ENCODE measurements at regions of chr12 and their contacts with region 1.

Region 1: DNA sequence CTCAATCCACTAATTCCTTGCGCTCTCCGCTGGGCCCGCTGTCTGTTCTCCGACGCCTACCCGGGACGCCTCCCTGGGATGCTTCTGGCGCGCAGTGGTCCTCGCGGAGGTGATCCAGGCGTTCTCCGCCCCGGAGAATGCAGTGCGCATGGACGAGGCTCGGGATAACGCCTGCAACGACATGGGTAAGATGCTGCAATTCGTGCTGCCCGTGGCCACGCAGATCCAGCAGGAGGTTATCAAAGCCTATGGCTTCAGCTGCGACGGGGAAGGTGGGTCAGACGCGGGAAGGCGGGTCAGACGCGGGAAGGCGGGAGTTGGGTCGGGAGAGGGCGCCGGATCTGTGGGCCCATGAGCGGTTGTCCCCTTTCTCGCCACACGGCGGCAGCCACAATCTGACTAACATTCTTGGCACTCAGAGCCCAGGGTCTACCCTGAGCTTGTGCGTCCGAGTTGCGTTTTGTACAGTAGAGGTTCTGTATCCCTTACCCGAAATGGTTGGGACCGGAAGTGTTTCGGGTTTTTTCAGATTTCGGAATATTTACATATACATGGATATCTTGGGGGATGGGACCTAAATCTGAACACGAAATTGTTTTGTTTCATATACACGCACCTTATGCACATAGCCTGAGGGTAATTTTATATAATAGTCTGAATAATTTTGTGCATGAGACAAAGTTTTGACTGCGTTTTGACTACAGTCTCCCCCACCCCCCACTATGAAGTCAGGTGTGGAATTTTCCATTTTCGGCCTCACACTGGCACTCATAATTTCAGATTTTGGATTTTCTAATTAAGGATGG is 762 bp downstream of the C12orf57 start:
- DNase-seq: peak; percentile 97
- H3K4me3 ChIP-seq: peak overlapping the region; percentile 64
- H3K27ac ChIP-seq: peak overlapping the region; percentile 99
- H3K4me1 ChIP-seq: peaks cover 18% of the 10 kb centered on the region
- H3K27me3 ChIP-seq: no peaks in the 10 kb centered on the region
- CTCF ChIP-seq: peak; percentile 92

Region 2: GRCh38 chr12:6965026-6965661 is 20.6 kb after region 1 on chr12:
- CTCF ChIA-PET with region 1: interaction called, 20 read pairs
- POLR2A ChIA-PET with region 1: interaction called, 19 read pairs
- intact Hi-C with region 1: loop called (anchors 1 kb)
- DNase-seq: peak; percentile 95
- H3K4me3 ChIP-seq: no peak overlapping the region
- H3K27ac ChIP-seq: peak overlapping the region; percentile 77
- H3K4me1 ChIP-seq: peaks cover 60% of the 10 kb centered on the region
- H3K27me3 ChIP-seq: no peaks in the 10 kb centered on the region
- CTCF ChIP-seq: peak; percentile 96

Region 3: GRCh38 chr12:7092229-7092985 is 147.8 kb after region 1 on chr12 and contains the start of gene C1R:
- CTCF ChIA-PET with region 1: no interaction called
- POLR2A ChIA-PET with region 1: no interaction called
- intact Hi-C with region 1: loop called (anchors 1 kb)
- DNase-seq: peak; percentile 79
- H3K4me3 ChIP-seq: peak within 1 kb of the TSS; percentile 47
- H3K27ac ChIP-seq: no peak within 1 kb of the TSS
- H3K4me1 ChIP-seq: peaks cover 8% of the 10 kb centered on the region
- H3K27me3 ChIP-seq: no peaks in the 10 kb centered on the region
- CTCF ChIP-seq: peak; percentile 90
- total RNA-seq, gene C1R: 10.9 and 15.0 TPM in 2 replicates

Region 4: DNA sequence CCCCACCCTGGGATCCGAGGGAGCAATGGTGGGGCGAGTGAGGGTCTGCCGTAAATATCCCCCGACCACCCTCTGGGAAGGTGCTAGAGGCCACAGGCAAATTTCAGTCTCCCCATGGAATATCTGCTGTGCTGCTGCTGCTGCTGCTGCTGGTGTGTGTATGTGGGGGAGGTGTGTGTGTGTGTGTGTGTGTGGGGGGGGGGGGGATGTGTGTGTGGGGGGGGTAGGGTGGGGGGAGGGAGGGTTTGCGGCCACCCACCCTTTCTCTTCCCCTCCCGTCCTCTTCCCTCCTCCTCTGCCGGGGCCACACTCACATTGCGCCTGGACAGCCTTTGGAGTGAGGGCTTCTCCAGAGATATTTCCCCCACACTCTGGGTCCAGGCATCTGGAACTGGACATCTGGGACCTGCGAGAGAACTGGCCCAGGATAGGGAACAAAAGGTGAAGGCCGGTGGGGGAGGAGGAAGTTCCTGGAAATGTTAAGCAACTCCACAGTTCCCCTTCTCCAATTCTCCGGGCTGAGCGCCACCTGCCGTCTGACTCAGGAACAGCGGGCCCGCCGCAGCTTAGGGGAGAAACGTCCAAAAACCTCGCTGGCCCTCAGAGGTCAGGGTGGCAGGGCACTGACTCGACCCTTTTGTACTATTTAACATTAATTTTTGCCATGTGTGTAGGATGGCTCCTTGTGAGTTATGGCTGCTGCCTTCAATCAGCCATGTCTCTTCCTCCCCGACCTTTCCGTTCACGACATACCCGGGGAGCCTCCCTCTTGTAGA is 164.4 kb after region 1 on chr12 and contains the start of gene C1RL:
- CTCF ChIA-PET with region 1: interaction called, 6 read pairs
- POLR2A ChIA-PET with region 1: interaction called, 13 read pairs
- intact Hi-C with region 1: loop called (anchors 1 kb)
- DNase-seq: peak; percentile 82
- H3K4me3 ChIP-seq: peak within 1 kb of the TSS; percentile 42
- H3K27ac ChIP-seq: peak within 1 kb of the TSS; percentile 52
- H3K4me1 ChIP-seq: no peaks in the 10 kb centered on the region
- H3K27me3 ChIP-seq: no peaks in the 10 kb centered on the region
- CTCF ChIP-seq: peak; percentile 96
- total RNA-seq, gene C1RL: 2.4 and 4.0 TPM in 2 replicates